Adrenal gland (tissue), 19 donors: ENCODE measurements at regions of chr10 and their contacts with region 1.

Region 1: GRCh38 chr10:11424456-11425297 is 186.8 kb downstream of the USP6NL start:
- DNase-seq: peak; percentile 62 to 83 (median 77)
- H3K4me3 ChIP-seq: no peak overlapping the region
- H3K27ac ChIP-seq: no peak overlapping the region
- H3K4me1 ChIP-seq: no peaks in the 10 kb centered on the region
- H3K27me3 ChIP-seq: no peaks in the 10 kb centered on the region
- CTCF ChIP-seq: peak; percentile 69 to 91 (median 77)
- POLR2A ChIP-seq: no peak

Region 2: DNA sequence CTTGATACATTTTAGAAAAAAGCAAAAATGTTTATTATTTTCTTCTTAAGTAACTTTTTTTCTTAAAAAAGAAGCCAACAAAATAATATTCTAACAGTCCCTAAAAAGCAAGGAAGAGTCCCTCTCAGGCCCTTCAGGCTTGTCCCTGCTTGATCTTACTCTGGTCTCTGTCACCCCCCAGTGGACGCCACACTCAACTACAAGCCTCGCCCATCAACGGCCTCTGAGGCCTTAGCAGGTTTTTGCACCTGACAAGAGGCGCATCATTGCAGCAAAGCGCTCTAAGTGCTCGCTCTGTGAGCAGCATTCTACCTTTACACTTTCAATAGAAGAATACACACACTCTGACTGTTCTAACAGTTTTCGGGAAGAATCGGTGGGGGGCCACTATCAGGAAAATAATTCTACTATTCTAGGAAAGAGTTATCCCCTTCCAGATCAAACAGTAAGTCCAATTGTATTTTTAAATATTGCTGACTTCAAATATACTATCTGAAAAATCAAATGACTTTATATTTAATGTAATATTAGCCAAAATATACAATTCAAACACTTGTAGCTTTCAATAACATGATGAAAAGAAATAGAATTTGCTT is 47.6 kb after region 1 on chr10:
- intact Hi-C with region 1: loop called in 1 of 2 experiments (anchors 10 kb)
- DNase-seq: peak; percentile 51 to 85 (median 58)
- H3K4me3 ChIP-seq: no peak overlapping the region
- H3K27ac ChIP-seq: no peak overlapping the region
- H3K4me1 ChIP-seq: peaks cover 7 to 8% of the 10 kb centered on the region in 2 donors
- H3K27me3 ChIP-seq: no peaks in the 10 kb centered on the region
- CTCF ChIP-seq: peak; percentile 62 to 90 (median 81)
- POLR2A ChIP-seq: no peak

Region 3: GRCh38 chr10:11757821-11758463 is 333.3 kb after region 1 on chr10:
- intact Hi-C with region 1: loop called in 1 of 2 experiments (anchors 10 kb)
- DNase-seq: peak; percentile 87 to 97 (median 93)
- H3K4me3 ChIP-seq: no peak overlapping the region
- H3K27ac ChIP-seq: peak overlapping the region; percentile 63 to 91 (median 79)
- H3K4me1 ChIP-seq: peaks cover 21 to 22% of the 10 kb centered on the region in 2 donors
- H3K27me3 ChIP-seq: no peaks in the 10 kb centered on the region
- CTCF ChIP-seq: peak; percentile 76 to 97 (median 94)
- POLR2A ChIP-seq: no peak